Right cardiac atrium (tissue), 5 donors: ENCODE measurements at regions of chr10 and their contacts with region 1.

Region 1: GRCh38 chr10:26860443-26861204 is at the start of gene ABI1:
- DNase-seq: peak; percentile 98 to 99 (median 98)
- ATAC-seq: peak; percentile 99
- H3K4me3 ChIP-seq: peak within 1 kb of the TSS; percentile 88
- H3K27ac ChIP-seq: peak within 1 kb of the TSS; percentile 97
- H3K4me1 ChIP-seq: no peaks in the 10 kb centered on the region
- H3K27me3 ChIP-seq: no peaks in the 10 kb centered on the region
- total RNA-seq, gene ABI1: 24.8 to 28.2 (median 26.5) TPM

Region 2: DNA sequence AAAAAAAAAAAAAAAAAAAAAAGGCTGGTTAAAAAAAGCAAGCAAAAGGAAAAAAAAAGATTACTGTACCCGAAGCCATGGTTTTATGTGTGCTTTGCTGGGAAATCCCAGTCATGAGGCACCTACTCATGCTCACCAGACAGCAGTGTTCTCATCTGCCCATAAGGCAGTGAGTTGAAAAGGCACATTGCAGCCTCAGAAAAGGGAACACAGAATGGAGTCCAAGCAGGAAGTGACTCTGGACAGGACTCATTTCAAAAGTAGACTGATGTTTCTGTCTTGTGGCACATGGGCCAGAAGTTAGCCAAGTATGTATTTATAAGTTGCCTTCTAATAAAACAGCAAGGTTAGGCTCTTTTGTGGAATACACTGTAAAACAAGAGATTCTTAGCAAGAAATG is 122.9 kb before region 1 on chr10:
- intact Hi-C with region 1: loop called in 1 of 4 experiments (anchors 10 kb)
- DNase-seq: no peak
- ATAC-seq: peak; percentile 17 to 56
- H3K4me3 ChIP-seq: no peak overlapping the region
- H3K27ac ChIP-seq: no peak overlapping the region
- H3K4me1 ChIP-seq: no peaks in the 10 kb centered on the region
- H3K27me3 ChIP-seq: no peaks in the 10 kb centered on the region

Region 3: DNA sequence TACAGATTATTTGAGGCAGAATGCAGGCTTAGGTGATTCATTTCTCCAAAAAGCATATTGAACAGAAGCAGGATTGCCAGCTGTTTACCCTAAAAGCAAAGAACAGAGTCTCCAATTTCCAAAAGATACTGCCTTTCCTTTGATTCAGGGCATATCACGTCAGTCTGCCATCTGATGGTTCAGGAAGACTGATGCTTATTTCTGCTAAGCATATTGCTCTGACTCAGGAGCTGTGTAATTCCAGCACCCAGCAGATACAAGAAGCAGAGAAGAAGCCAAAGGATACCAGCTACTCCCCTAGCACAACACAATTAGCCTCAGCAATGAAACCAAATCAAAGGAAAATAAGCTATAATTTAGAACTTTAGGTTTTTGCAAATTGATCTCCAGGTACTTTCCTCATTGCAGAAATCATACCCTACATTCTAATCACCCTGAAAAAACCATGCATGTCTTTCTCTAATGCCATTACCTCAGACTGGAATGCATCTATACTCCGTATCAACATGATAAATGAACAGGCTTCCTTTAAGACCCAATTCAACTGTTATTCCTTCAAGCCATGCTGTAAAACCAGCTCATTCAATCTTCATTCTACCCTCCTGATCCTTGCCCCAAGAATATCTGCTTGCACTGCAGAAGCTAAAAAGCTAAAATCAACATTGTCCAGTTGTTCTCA is 54.9 kb before region 1 on chr10:
- intact Hi-C with region 1: loop called in 1 of 4 experiments (anchors 10 kb)
- DNase-seq: no peak
- ATAC-seq: peak in 1 of 2 donors; percentile 42
- H3K4me3 ChIP-seq: no peak overlapping the region
- H3K27ac ChIP-seq: no peak overlapping the region
- H3K4me1 ChIP-seq: peaks cover 10% of the 10 kb centered on the region
- H3K27me3 ChIP-seq: no peaks in the 10 kb centered on the region

Region 4: DNA sequence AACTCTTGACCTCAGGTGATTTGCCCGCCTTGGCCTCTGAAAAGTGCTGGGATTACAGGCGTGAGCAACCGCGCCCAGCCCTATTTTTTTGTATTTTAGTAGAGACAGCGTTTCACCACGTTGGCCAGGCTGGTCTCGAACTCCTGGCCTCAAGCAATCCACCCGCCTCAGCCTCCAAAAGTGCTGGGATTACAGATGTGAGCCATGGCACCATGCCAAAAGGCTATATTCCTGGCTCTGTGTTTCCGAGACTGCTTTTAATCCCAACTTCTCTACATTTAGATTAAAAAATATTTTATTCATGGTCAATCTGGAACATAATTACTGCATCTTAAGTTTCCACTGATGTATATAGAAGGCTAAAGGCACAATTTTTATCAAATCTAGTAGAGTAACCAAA is 250.7 kb after region 1 on chr10:
- intact Hi-C with region 1: no loop called
- DNase-seq: no peak
- ATAC-seq: no peak
- H3K4me3 ChIP-seq: no peak overlapping the region
- H3K27ac ChIP-seq: no peak overlapping the region
- H3K4me1 ChIP-seq: no peaks in the 10 kb centered on the region
- H3K27me3 ChIP-seq: no peaks in the 10 kb centered on the region